Naive thymus-derived CD8-positive, alpha-beta T cell (primary cell): ENCODE measurements at regions of chr6 and their contacts with region 1.

Region 1: GRCh38 chr6:43386492-43386891 is 17.0 kb upstream of the ZNF318 start:
- DNase-seq: peak in 2 of 10 donors; percentile 45 to 62
- ATAC-seq: no peak
- H3K4me3 Mint-ChIP-seq: no peak overlapping the region
- H3K27ac Mint-ChIP-seq: peak overlapping the region in 8 of 10 donors; percentile 26 to 88 (median 52)
- H3K4me1 Mint-ChIP-seq: peaks cover 28 to 71% (median 66%) of the 10 kb centered on the region in 4 donors
- H3K27me3 Mint-ChIP-seq: peaks cover 2 to 13% (median 3%) of the 10 kb centered on the region in 5 donors

Region 2: DNA sequence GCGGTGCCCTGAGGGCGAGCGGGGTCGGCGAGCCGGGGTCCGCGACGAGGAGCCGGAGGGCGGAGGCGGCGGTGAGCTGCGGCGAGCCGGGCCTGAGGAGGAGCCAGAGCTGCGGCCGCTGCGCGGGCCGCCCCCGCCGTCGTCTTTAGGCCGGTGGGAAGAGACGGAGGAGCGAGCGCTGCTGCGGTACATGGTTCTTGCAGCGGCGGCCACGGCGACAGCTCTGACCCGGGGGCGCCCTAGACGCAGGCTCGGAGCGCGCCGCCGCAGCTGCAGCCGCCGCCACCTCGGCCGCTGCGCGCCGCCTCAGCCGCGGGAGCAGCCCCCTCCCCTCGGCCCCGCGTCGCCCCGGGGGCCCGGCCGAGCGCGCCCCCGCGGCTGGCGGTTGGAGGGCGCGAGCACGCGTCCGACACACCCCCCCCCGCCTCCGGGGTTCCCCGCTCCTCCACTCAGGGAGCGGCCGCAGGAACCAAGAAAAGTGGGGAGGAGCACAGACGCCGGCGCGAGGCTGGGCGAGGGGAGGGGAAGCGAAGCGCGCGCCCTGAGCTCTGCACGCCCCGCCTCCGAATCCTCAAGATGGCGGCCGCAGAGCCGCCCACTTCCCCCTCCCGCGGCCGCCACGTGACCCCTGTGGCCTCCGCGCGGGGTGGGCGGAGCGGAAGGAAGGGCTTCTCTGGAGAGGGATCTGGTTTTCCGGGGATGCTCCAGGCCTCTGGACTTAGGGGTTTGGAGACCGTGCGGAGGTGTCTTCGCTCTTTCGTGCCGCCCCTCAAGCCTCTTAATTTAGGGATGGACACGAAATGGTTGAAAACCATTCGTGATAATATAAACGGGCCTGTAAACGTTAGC is 17.1 kb before region 1 on chr6 and contains the start of gene ZNF318:
- POLR2A ChIA-PET with region 1: interaction called, 146 read pairs
- DNase-seq: peak; percentile 89 to 96 (median 92)
- ATAC-seq: peak; percentile 91 to 95
- H3K4me3 Mint-ChIP-seq: peak within 1 kb of the TSS; percentile 51 to 96 (median 93)
- H3K27ac Mint-ChIP-seq: peak within 1 kb of the TSS; percentile 92 to 98 (median 97)
- H3K4me1 Mint-ChIP-seq: peaks cover 23 to 72% (median 49%) of the 10 kb centered on the region in 4 donors
- H3K27me3 Mint-ChIP-seq: no peaks in the 10 kb centered on the region
- polyA plus RNA-seq, gene ZNF318: 3.4 to 7.0 (median 5.7) TPM

Region 3: GRCh38 chr6:43396407-43397149 is 10.1 kb after region 1 on chr6:
- POLR2A ChIA-PET with region 1: interaction called, 10 read pairs
- DNase-seq: no peak
- ATAC-seq: no peak
- H3K4me3 Mint-ChIP-seq: no peak overlapping the region
- H3K27ac Mint-ChIP-seq: no peak overlapping the region
- H3K4me1 Mint-ChIP-seq: peaks cover 8 to 36% (median 29%) of the 10 kb centered on the region in 4 donors
- H3K27me3 Mint-ChIP-seq: peaks cover 0 to 19% (median under 1%) of the 10 kb centered on the region in 5 donors